GM12878 (cell line): ENCODE measurements at regions of chr1 and their contacts with region 1.

Region 1: DNA sequence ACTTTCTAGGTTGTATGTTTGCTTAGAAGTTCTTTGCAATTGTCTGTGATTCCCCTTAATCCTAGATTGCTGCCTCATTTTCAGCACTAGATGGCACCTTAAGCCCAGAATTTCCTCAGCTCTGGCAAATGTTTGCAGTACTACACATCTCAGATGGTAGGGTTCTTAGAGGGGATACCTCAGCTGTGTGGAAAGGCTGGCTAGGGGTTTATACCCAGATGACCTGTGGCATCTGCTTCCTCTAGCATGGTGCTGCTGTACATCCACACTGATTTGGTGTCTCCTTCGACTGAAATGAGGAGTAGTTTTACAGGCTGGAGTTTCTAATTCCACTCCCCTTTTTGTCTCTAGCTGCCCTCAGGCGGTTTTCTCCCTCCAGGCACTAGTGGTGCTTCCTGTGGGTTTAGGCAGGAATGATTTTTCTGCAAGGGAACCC is 23.5 kb downstream of the ASB17 start:
- DNase-seq: peak; percentile 7
- ATAC-seq: peak; percentile 99
- H3K4me3 ChIP-seq: no peak overlapping the region
- H3K27ac ChIP-seq: no peak overlapping the region
- H3K4me1 ChIP-seq: no peaks in the 10 kb centered on the region
- H3K27me3 ChIP-seq: no peaks in the 10 kb centered on the region
- CTCF ChIP-seq: peak; percentile 45 to 69 (median 53); a peak in 4 of 6 replicates
- EP300 ChIP-seq: no peak
- POLR2A ChIP-seq: no peak
- RAD21 ChIP-seq: peak; percentile 94

Region 2: DNA sequence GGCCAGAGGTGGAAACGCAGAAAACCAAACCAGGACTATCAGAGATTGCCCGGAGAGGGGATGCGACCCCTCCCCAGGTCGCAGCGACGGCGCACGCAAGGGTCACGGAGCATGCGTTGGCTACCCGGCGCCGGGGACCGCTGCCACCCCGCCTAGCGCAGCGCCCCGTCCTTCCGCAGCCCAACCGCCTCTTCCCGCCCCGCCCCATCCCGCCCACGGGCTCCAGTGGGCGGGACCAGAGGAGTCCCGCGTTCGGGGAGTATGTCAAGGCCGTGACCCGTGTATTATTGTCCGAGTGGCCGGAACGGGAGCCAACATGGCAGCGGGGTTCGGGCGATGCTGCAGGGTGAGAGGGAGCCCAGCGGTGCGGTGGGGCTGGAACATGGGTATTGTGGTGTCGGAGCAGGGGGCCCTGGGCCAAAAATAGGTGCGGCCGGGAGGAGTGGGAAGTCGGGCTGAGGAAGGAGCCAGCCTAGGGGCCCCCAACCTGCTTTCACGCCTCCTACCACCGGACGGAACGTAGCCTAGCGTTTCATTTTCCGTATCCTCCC is 184.2 kb before region 1 on chr1 and contains the start of gene ACADM:
- CTCF ChIA-PET with region 1: no interaction called
- POLR2A ChIA-PET with region 1: no interaction called
- RAD21 ChIA-PET with region 1: no interaction called
- SMC1A ChIA-PET with region 1: no interaction called
- in situ Hi-C with region 1: no loop called
- intact Hi-C with region 1: no loop called
- DNase-seq: peak; percentile 53
- ATAC-seq: peak; percentile 91
- H3K4me3 ChIP-seq: peak within 1 kb of the TSS; percentile 70
- H3K27ac ChIP-seq: peak within 1 kb of the TSS; percentile 83
- H3K4me1 ChIP-seq: 0 out of 2 replicates have a peak, but pooled peaks cover 2% of the 10 kb centered on the region
- H3K27me3 ChIP-seq: no peaks in the 10 kb centered on the region
- CTCF ChIP-seq: no peak
- EP300 ChIP-seq: no peak
- POLR2A ChIP-seq: peak; percentile 99
- RAD21 ChIP-seq: no peak
- polyA plus RNA-seq, gene ACADM: 178 to 191 TPM

Region 3: GRCh38 chr1:75991497-75992114 is 82.9 kb after region 1 on chr1:
- CTCF ChIA-PET with region 1: interaction called, 14 read pairs
- POLR2A ChIA-PET with region 1: no interaction called
- RAD21 ChIA-PET with region 1: interaction called, 6 read pairs
- SMC1A ChIA-PET with region 1: interaction called, 4 read pairs
- in situ Hi-C with region 1: no loop called
- intact Hi-C with region 1: loop called (anchors 2 kb)
- DNase-seq: no peak
- ATAC-seq: peak; percentile 86
- H3K4me3 ChIP-seq: no peak overlapping the region
- H3K27ac ChIP-seq: no peak overlapping the region
- H3K4me1 ChIP-seq: no peaks in the 10 kb centered on the region
- H3K27me3 ChIP-seq: no peaks in the 10 kb centered on the region
- CTCF ChIP-seq: peak; percentile 75 to 78 (median 77)
- EP300 ChIP-seq: no peak
- POLR2A ChIP-seq: no peak
- RAD21 ChIP-seq: peak; percentile 72

Region 4: DNA sequence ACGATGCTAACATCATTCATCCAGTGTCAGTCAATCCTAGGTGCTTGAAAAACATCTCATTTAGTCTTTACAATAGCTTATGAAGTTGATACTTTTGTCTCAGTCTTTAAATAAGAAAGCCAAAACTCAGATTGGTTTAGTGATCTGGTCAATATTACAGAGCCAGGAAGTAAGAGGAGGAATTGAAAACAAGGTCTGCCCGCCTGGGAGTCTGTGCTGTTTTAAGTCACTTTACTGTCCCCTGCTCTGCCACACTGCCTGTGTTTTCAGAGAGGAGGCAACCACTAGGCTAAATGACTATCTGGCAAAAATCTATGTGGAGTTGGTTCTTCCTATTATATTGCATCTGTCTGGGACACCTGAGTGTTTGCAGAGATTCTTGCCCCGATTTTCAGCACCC is 228.2 kb after region 1 on chr1:
- CTCF ChIA-PET with region 1: interaction called, 3 read pairs
- POLR2A ChIA-PET with region 1: no interaction called
- RAD21 ChIA-PET with region 1: interaction called, 4 read pairs
- SMC1A ChIA-PET with region 1: no interaction called
- in situ Hi-C with region 1: no loop called
- intact Hi-C with region 1: loop called (anchors 5 kb)
- DNase-seq: no peak
- ATAC-seq: peak; percentile 91
- H3K4me3 ChIP-seq: no peak overlapping the region
- H3K27ac ChIP-seq: no peak overlapping the region
- H3K4me1 ChIP-seq: no peaks in the 10 kb centered on the region
- H3K27me3 ChIP-seq: no peaks in the 10 kb centered on the region
- CTCF ChIP-seq: no peak
- EP300 ChIP-seq: no peak
- POLR2A ChIP-seq: no peak
- RAD21 ChIP-seq: no peak

Region 5: DNA sequence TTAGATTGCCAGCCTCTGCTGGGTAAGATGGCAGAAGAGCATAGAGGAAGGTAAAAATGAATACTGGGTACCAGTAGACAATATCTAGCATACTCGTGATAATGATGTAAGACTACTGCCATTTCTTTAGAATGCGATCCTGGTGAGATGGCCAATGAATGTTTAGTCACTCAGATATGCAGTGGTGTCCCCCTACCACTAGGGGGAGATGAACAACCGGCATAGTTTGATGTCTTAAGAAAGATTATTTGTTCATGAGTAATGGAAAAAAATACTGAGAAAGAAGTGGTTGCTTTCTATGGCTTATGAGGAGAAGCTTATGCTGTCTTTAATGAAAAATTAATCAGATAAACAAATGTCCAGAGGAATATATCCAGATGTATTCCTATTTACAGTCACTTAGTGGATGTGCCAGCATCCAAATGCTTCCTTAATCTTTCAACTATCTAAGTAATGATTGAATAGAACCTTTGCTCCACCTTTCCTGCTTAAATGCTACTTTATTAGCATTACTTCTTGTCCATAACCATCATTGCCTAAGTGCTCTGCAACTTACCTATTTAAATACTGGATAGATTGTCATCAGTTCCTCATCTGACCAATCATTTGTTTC is 422.4 kb after region 1 on chr1:
- CTCF ChIA-PET with region 1: interaction called, 4 read pairs
- POLR2A ChIA-PET with region 1: no interaction called
- RAD21 ChIA-PET with region 1: no interaction called
- SMC1A ChIA-PET with region 1: no interaction called
- in situ Hi-C with region 1: no loop called
- intact Hi-C with region 1: loop called (anchors 5 kb)
- DNase-seq: no peak
- ATAC-seq: peak; percentile 90
- H3K4me3 ChIP-seq: no peak overlapping the region
- H3K27ac ChIP-seq: no peak overlapping the region
- H3K4me1 ChIP-seq: no peaks in the 10 kb centered on the region
- H3K27me3 ChIP-seq: no peaks in the 10 kb centered on the region
- CTCF ChIP-seq: peak; percentile 83 to 89 (median 89)
- EP300 ChIP-seq: no peak
- POLR2A ChIP-seq: no peak
- RAD21 ChIP-seq: peak; percentile 85